T-cell (primary cell): ENCODE measurements at regions of chr6 and their contacts with region 1.

Region 1: DNA sequence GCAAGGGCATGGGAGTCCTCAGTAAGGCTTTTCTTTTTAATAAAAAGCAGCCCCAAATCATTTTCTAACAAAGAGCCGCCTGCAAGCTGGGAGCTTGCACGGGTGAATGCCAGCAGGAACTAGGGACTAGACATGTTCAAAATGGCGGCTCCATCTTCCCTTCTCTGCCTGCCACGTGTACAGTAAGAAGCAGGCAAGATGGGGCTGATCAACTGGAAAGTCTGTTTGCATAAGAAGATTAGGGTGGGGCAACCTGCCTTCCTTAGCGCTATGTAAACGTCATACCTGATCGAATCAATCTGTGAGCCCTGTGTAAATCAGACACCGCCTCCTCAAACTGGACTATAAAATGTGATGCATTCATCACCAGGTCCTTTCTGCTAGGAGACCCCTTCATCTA is 299.4 kb upstream of the SOX4 start:
- DNase-seq: no peak
- ATAC-seq: no peak
- H3K4me3 ChIP-seq: no peak overlapping the region
- H3K4me3 Mint-ChIP-seq: no peak overlapping the region
- H3K27ac ChIP-seq: no peak overlapping the region
- H3K27ac Mint-ChIP-seq: no peak overlapping the region
- H3K4me1 ChIP-seq: no peaks in the 10 kb centered on the region
- H3K4me1 Mint-ChIP-seq: no peaks in the 10 kb centered on the region
- H3K27me3 ChIP-seq: no peaks in the 10 kb centered on the region
- H3K27me3 Mint-ChIP-seq: peaks cover 6 to 10% of the 10 kb centered on the region in 2 donors

Region 2: GRCh38 chr6:21132856-21133838 is 161.0 kb before region 1 on chr6:
- CTCF ChIA-PET with region 1: no interaction called
- POLR2A ChIA-PET with region 1: no interaction called
- DNase-seq: no peak
- ATAC-seq: no peak
- H3K4me3 ChIP-seq: no peak overlapping the region
- H3K4me3 Mint-ChIP-seq: no peak overlapping the region
- H3K27ac ChIP-seq: no peak overlapping the region
- H3K27ac Mint-ChIP-seq: no peak overlapping the region
- H3K4me1 ChIP-seq: no peaks in the 10 kb centered on the region
- H3K4me1 Mint-ChIP-seq: no peaks in the 10 kb centered on the region
- H3K27me3 ChIP-seq: no peaks in the 10 kb centered on the region
- H3K27me3 Mint-ChIP-seq: no peaks in the 10 kb centered on the region

Region 3: DNA sequence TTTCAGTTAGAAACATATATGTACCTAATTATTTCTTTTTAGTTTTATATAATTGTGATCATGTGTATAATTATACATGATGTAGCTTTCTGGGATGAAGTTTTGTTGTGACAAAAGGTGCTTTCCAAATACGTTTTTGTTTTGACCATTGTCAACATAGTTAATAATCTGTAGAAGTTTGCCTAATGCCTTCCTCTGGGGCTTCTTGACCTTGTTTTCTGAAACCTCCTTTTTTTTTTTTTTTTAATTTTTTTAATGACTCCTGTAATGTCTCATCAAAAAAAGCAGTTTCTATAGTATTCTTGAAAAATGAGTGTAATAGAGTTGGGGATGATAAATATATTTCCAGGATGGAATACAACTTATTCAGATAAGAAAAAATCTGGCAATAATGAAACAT is 135.3 kb before region 1 on chr6:
- CTCF ChIA-PET with region 1: no interaction called
- POLR2A ChIA-PET with region 1: interaction called in 1 of 2 experiments, 14 read pairs
- DNase-seq: no peak
- ATAC-seq: no peak
- H3K4me3 ChIP-seq: no peak overlapping the region
- H3K4me3 Mint-ChIP-seq: no peak overlapping the region
- H3K27ac ChIP-seq: no peak overlapping the region
- H3K27ac Mint-ChIP-seq: no peak overlapping the region
- H3K4me1 ChIP-seq: no peaks in the 10 kb centered on the region
- H3K4me1 Mint-ChIP-seq: peaks cover 8 to 15% (median 13%) of the 10 kb centered on the region in 3 donors
- H3K27me3 ChIP-seq: no peaks in the 10 kb centered on the region
- H3K27me3 Mint-ChIP-seq: no peaks in the 10 kb centered on the region